Activated CD4-positive, alpha-beta memory T cell treated with anti-CD3 and anti-CD28 coated beads, Interleukin-2, amount 10 ng/mL, durations not matched to agents 7 days and 5 days (primary cell): ENCODE measurements at regions of chr3 and their contacts with region 1.

Region 1: DNA sequence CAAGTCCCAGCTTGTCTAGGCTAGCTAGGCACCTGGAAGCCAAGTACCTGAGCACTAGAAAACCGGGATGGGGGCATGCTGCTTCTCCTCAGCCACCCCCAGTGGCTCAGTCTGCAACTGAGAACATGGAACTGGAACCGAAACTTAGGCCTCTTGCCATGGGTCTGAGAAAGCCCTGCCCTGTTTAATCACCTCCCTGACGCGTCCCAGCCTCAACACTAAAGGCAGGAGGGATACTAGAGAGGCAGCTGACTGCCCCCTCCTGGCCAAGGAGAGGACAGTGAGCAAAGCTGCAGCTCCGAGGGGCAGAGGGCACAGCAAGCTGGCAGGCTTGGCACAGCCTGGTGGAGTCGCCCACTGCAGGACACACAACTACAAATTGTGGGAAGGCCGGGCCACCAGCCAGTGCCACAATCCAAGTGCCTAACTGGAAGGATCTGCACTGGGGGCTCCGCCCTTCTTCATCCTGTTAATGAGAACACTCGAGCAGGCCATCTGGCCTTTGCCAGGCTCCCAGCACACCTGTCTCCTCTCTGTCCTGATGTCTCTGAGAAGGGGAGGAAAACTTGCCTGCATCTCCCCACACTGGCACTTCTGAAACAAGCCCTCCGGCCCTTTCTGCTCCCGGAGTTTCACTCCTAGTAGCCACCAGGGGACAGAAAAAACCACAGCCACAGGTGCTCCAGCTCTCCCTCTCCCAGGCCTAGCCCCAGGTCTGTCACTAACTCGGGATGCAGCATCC is 53.7 kb downstream of the BDH1 start:
- DNase-seq: peak; percentile 57
- H3K4me3 Mint-ChIP-seq: no peak overlapping the region
- H3K27ac Mint-ChIP-seq: no peak overlapping the region
- H3K4me1 Mint-ChIP-seq: no peaks in the 10 kb centered on the region
- H3K27me3 Mint-ChIP-seq: no peaks in the 10 kb centered on the region

Region 2: GRCh38 chr3:197224034-197224444 is 278.0 kb before region 1 on chr3:
- CTCF ChIA-PET with region 1: interaction called, 23 read pairs
- POLR2A ChIA-PET with region 1: no interaction called
- DNase-seq: no peak
- H3K4me3 Mint-ChIP-seq: no peak overlapping the region
- H3K27ac Mint-ChIP-seq: no peak overlapping the region
- H3K4me1 Mint-ChIP-seq: peaks cover 14% of the 10 kb centered on the region
- H3K27me3 Mint-ChIP-seq: no peaks in the 10 kb centered on the region